Vagina (tissue), 2 donors: ENCODE measurements at regions of chr12 and their contacts with region 1.

Region 1: GRCh38 chr12:12899530-12900380 is 8.4 kb downstream of the GPRC5A start:
- DNase-seq: peak in 1 of 2 donors; percentile 95
- H3K4me3 ChIP-seq: no peak overlapping the region
- H3K27ac ChIP-seq: peak overlapping the region; percentile 92
- H3K4me1 ChIP-seq: peaks cover 50% of the 10 kb centered on the region
- H3K27me3 ChIP-seq: no peaks in the 10 kb centered on the region
- CTCF ChIP-seq: no peak
- POLR2A ChIP-seq: no peak

Region 2: GRCh38 chr12:13208533-13209435 is 309.0 kb after region 1 on chr12:
- intact Hi-C with region 1: loop called (anchors 10 kb)
- DNase-seq: no peak
- H3K4me3 ChIP-seq: no peak overlapping the region
- H3K27ac ChIP-seq: peak overlapping the region; percentile 3
- H3K4me1 ChIP-seq: peaks cover 81% of the 10 kb centered on the region
- H3K27me3 ChIP-seq: no peaks in the 10 kb centered on the region
- CTCF ChIP-seq: peak in 2 of 3 experiments; percentile 12 to 23
- POLR2A ChIP-seq: no peak